A673 (cell line): ENCODE measurements at regions of chr15 and their contacts with region 1.

Region 1: GRCh38 chr15:58966698-58967097 is 20.8 kb upstream of the RNF111 start:
- DNase-seq: no peak
- H3K4me3 ChIP-seq: no peak overlapping the region
- H3K27ac ChIP-seq: no peak overlapping the region
- H3K4me1 ChIP-seq: no peaks in the 10 kb centered on the region
- H3K27me3 ChIP-seq: no peaks in the 10 kb centered on the region
- CTCF ChIP-seq: no peak

Region 2: GRCh38 chr15:57697588-57697987 is 1269.1 kb before region 1 on chr15:
- CTCF ChIA-PET with region 1: interaction called, 10 read pairs
- POLR2A ChIA-PET with region 1: no interaction called
- intact Hi-C with region 1: no loop called
- DNase-seq: no peak
- H3K4me3 ChIP-seq: no peak overlapping the region
- H3K27ac ChIP-seq: no peak overlapping the region
- H3K4me1 ChIP-seq: peaks cover 28% of the 10 kb centered on the region
- H3K27me3 ChIP-seq: no peaks in the 10 kb centered on the region
- CTCF ChIP-seq: no peak

Region 3: GRCh38 chr15:58551764-58552504 is 414.8 kb before region 1 on chr15:
- CTCF ChIA-PET with region 1: no interaction called
- POLR2A ChIA-PET with region 1: no interaction called
- intact Hi-C with region 1: no loop called
- DNase-seq: no peak
- H3K4me3 ChIP-seq: no peak overlapping the region
- H3K27ac ChIP-seq: no peak overlapping the region
- H3K4me1 ChIP-seq: no peaks in the 10 kb centered on the region
- H3K27me3 ChIP-seq: no peaks in the 10 kb centered on the region
- CTCF ChIP-seq: no peak